Activated naive CD4-positive, alpha-beta T cell treated with anti-CD3 and anti-CD28 coated beads for 36 hours (primary cell): ENCODE measurements at regions of chr2 and their contacts with region 1.

Region 1: DNA sequence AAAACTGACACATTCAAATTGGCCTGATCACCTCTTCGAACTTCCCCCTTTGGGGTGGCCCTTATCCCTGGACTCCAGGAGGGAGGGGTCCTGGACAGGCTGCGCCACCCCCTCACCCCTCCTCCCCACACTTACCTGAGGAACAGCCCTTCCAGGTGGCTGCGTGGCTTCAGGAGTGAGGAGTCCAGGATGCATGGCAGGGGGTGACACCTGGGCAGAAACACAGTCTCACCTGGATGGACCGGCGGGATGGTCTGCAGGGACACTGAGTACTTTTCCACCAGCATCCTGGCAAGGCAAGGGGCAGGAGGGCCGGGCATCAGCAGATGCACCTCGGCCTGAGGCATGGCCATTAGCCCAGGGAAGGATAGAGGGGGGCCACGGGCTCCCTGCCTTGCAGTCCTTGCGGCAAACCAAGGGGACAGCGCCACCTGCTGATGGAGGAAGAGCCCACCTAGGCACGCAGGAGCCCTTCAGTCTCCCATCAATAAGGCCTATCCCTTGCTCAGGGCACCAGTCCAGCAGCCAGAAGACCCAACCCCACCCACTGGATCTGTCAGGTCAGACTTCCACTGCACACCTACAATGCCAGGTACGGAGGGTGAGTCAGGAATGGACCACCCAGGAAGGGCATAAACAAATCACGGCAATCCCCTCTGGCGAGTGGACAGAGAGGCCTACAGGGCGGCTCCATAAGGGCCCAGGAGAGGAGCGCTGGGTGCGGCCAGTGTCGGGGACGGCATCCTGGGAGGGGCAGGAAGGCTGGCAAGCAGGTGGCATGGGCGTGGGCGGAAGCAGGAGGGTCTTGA is 26.0 kb downstream of the FAM178B start:
- DNase-seq: peak; percentile 92
- H3K4me3 Mint-ChIP-seq: no peak overlapping the region
- H3K27ac Mint-ChIP-seq: no peak overlapping the region
- H3K4me1 Mint-ChIP-seq: peaks cover 49% of the 10 kb centered on the region
- H3K27me3 Mint-ChIP-seq: no peaks in the 10 kb centered on the region

Region 2: DNA sequence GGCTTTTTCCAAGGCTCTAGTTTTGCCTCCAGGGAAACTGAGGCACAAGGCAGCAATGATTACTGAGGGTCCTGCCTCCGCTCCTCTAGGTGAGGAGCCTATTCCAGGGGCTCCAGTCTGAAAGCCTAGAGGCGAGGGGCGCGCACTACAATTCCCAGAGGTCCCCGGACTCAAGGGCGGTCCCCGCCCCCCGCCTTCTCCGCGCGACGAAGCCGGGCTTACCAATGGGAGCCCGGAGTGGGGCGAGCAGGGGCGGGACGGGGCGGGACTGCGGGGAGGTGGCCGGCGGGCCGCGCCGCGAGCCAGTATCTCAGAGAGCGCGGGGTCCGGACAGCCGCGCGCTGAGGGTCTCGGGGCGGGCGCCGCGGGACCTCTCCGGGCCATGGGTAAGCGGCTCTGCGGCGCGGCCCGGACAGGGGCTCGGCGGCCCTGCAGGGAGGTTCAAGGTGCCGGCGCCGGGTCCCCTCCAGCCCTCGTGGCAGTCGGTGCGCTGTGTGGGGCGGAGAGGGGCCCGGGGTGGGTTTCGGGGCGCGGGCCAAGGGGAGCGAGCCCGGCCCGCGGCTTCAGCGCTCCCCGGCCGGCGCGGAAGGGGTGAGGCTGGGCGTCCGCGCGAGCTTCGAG is 423.8 kb before region 1 on chr2 and contains the start of gene ARID5A:
- CTCF ChIA-PET with region 1: no interaction called
- intact Hi-C with region 1: loop called (anchors 5 kb)
- DNase-seq: peak; percentile 96
- H3K4me3 Mint-ChIP-seq: peak within 1 kb of the TSS; percentile 96
- H3K27ac Mint-ChIP-seq: peak within 1 kb of the TSS; percentile 99
- H3K4me1 Mint-ChIP-seq: peaks cover 60% of the 10 kb centered on the region
- H3K27me3 Mint-ChIP-seq: no peaks in the 10 kb centered on the region
- total RNA-seq, gene ARID5A: 349 to 351 TPM

Region 3: DNA sequence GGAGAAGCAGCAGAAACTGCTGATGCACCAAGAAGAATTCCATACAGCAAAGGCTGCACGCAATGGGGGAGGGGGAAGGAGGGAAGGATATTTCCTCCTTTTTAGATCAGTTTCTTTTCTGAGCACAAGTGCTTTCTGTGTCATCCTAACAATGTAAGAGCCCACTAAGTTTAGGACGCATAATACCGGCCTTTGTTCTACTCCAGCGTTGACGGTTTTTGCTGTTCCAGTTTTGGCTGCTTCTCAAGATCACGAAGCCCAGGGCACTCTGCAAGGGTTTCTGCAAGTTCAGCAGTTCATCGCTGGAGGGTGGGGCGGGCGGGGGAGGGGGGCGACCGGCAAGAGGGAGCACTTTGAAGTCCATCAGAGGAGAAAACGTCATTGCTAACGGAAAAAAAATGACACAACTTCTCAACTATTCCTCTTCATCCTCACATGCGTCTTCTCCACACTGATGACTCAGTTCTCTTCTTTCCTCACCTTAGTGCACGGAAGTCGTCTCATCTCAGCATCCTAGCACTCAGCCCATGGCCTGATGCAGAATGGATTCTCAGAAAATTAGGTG is 17.4 kb after region 1 on chr2:
- CTCF ChIA-PET with region 1: interaction called, 4 read pairs
- intact Hi-C with region 1: loop called (anchors 1 kb)
- DNase-seq: peak; percentile 53
- H3K4me3 Mint-ChIP-seq: no peak overlapping the region
- H3K27ac Mint-ChIP-seq: no peak overlapping the region
- H3K4me1 Mint-ChIP-seq: peaks cover 11% of the 10 kb centered on the region
- H3K27me3 Mint-ChIP-seq: no peaks in the 10 kb centered on the region

Region 4: DNA sequence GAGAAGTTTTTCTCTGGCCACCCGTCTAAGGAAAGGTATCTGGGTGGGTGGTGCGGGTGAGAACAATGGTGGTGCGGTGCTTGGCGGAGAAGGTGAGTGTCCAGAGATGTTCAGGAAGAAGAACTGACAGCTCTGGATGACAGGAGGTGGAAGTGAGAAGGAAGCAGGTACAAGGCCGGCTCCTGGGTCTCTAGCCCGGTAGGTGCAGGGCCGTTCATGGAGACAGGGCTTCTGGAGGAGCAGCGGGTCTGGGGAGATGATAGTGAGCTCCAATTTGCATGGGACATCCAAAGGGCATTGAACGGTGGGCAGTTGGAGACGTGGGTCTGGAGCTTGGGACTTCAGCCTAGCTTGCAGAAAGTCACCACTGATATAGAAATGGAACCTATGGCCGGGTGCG is 135.3 kb after region 1 on chr2:
- CTCF ChIA-PET with region 1: no interaction called
- intact Hi-C with region 1: loop called (anchors 5 kb)
- DNase-seq: no peak
- H3K4me3 Mint-ChIP-seq: peak overlapping the region; percentile 70
- H3K27ac Mint-ChIP-seq: no peak overlapping the region
- H3K4me1 Mint-ChIP-seq: peaks cover 14% of the 10 kb centered on the region
- H3K27me3 Mint-ChIP-seq: peaks cover 2% of the 10 kb centered on the region